ENCODE measurements at regions of chr1 and their contacts with region 1.

Region 1: GRCh38 chr1:149899460-149900293 is at the start of gene BOLA1:
- DNase-seq: peak; percentile 88
- ATAC-seq: peak; percentile 99
- H3K4me3 ChIP-seq: peak within 1 kb of the TSS; percentile 54
- H3K27ac ChIP-seq: peak within 1 kb of the TSS; percentile 61
- H3K4me1 ChIP-seq: peaks cover 4% of the 10 kb centered on the region
- H3K27me3 ChIP-seq: no peaks in the 10 kb centered on the region
- CTCF ChIP-seq: no peak
- POLR2A ChIP-seq: no peak
- RAD21 ChIP-seq: no peak
- total RNA-seq, gene BOLA1: 3.4 and 4.4 TPM in 2 replicates

Region 2: GRCh38 chr1:149937060-149937705 is 37.5 kb after region 1 on chr1:
- CTCF ChIA-PET with region 1: no interaction called
- POLR2A ChIA-PET with region 1: no interaction called
- dilution Hi-C with region 1: no loop called
- in situ Hi-C with region 1: loop called (anchors 5 kb)
- intact Hi-C with region 1: loop called (anchors 5 kb)
- DNase-seq: peak; percentile 58
- ATAC-seq: peak; percentile 22
- H3K4me3 ChIP-seq: peak overlapping the region; percentile 84
- H3K27ac ChIP-seq: peak overlapping the region; percentile 33; the same call in 1 of the 2 replicates
- H3K4me1 ChIP-seq: peaks cover 11% of the 10 kb centered on the region
- H3K27me3 ChIP-seq: no peaks in the 10 kb centered on the region
- CTCF ChIP-seq: peak; percentile 24; the same call in 1 of the 2 replicates
- POLR2A ChIP-seq: no peak
- RAD21 ChIP-seq: no peak

Region 3: GRCh38 chr1:150053926-150054325 is 154.2 kb after region 1 on chr1:
- CTCF ChIA-PET with region 1: no interaction called
- POLR2A ChIA-PET with region 1: no interaction called
- dilution Hi-C with region 1: no loop called
- in situ Hi-C with region 1: loop called (anchors 10 kb)
- intact Hi-C with region 1: loop called (anchors 5 kb)
- DNase-seq: no peak
- ATAC-seq: no peak
- H3K4me3 ChIP-seq: no peak overlapping the region
- H3K27ac ChIP-seq: no peak overlapping the region
- H3K4me1 ChIP-seq: no peaks in the 10 kb centered on the region; the same call in 1 of the 2 replicates
- H3K27me3 ChIP-seq: no peaks in the 10 kb centered on the region
- CTCF ChIP-seq: no peak
- POLR2A ChIP-seq: no peak
- RAD21 ChIP-seq: no peak

Measured in IMR-90 (cell line).